ENCODE measurements at regions of chr1 and their contacts with region 1.

Region 1: DNA sequence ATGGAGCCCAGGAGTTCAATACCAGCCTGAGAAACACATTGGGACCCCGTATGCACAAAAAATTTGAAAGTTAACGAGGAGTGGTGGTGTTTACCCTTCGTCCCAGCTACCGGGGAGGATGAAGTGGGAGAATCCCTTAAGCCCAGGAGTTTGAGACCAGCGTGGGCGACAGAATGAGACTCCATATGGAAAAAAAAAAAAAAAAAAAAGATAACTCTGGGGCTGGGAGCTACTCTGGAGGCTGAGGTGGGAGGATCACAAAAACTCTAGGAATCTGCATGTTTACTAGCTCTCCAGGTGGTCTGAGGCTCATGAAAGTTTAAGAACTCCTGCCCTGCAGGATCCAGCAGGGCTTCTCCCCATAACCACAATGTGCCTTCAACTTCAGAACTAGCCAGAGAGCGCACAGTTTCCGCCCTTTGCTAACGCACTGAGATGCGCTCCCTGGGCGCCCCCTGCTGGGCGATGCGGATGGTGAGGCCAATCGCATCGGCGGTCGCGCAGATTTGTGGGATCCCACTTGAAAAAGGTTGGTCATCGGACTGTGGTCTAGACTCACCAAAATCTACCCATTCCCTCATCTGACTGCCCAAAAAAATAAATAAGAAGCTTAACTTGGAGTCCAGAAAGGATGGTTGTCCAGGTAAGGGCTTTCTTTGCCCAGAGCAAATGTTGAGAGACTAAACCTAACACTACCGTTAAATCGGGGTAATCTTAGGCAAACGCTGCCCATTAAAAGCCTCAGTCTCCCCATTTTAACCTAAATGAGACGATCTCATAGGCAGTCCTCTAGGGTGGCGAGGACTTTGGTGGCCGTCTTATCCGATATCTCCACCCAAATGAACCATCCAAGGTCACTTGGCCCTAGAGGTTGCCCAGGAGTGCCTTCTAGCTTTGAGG is 8.8 kb downstream of the ZNF683 start:
- DNase-seq: peak; percentile 81
- ATAC-seq: peak; percentile 72
- H3K4me3 Mint-ChIP-seq: no peak overlapping the region
- H3K27ac Mint-ChIP-seq: no peak overlapping the region
- H3K4me1 Mint-ChIP-seq: peaks cover 27% of the 10 kb centered on the region
- H3K27me3 Mint-ChIP-seq: peaks cover 24% of the 10 kb centered on the region
- CTCF ChIP-seq: peak; percentile 90

Region 2: GRCh38 chr1:26190373-26190987 is 173.3 kb before region 1 on chr1 and contains the start of gene CATSPER4:
- CTCF ChIA-PET with region 1: no interaction called
- POLR2A ChIA-PET with region 1: no interaction called
- intact Hi-C with region 1: loop called (anchors 1 kb)
- DNase-seq: no peak
- ATAC-seq: no peak
- H3K4me3 Mint-ChIP-seq: no peak within 1 kb of the TSS
- H3K27ac Mint-ChIP-seq: no peak within 1 kb of the TSS
- H3K4me1 Mint-ChIP-seq: no peaks in the 10 kb centered on the region
- H3K27me3 Mint-ChIP-seq: no peaks in the 10 kb centered on the region
- CTCF ChIP-seq: no peak
- total RNA-seq, gene CATSPER4: not detected in 2 replicates

Region 3: GRCh38 chr1:26306290-26307229 is 57.2 kb before region 1 on chr1 and contains the start of gene UBXN11:
- CTCF ChIA-PET with region 1: no interaction called
- POLR2A ChIA-PET with region 1: no interaction called
- intact Hi-C with region 1: no loop called
- DNase-seq: peak; percentile 81
- ATAC-seq: peak; percentile 99
- H3K4me3 Mint-ChIP-seq: peak within 1 kb of the TSS; percentile 99
- H3K27ac Mint-ChIP-seq: peak within 1 kb of the TSS; percentile 94
- H3K4me1 Mint-ChIP-seq: peaks cover 27% of the 10 kb centered on the region
- H3K27me3 Mint-ChIP-seq: no peaks in the 10 kb centered on the region
- CTCF ChIP-seq: no peak
- total RNA-seq, gene UBXN11: 35.5 and 36.9 TPM in 2 replicates

Region 4: GRCh38 chr1:26408604-26409003 is 44.8 kb after region 1 on chr1:
- CTCF ChIA-PET with region 1: no interaction called
- POLR2A ChIA-PET with region 1: no interaction called
- intact Hi-C with region 1: loop called (anchors 1 kb)
- DNase-seq: peak; percentile 69
- ATAC-seq: peak; percentile 93
- H3K4me3 Mint-ChIP-seq: no peak overlapping the region
- H3K27ac Mint-ChIP-seq: peak overlapping the region; percentile 30
- H3K4me1 Mint-ChIP-seq: peaks cover 14% of the 10 kb centered on the region
- H3K27me3 Mint-ChIP-seq: peaks cover 61% of the 10 kb centered on the region
- CTCF ChIP-seq: no peak

Measured in activated B cell treated with CpG ODN at 0.5 μM for 24 hours (primary cell).